Activated T-helper 2 cell treated with anti-CD3 and anti-CD28 coated beads, Interferon-gamma antibody, Interleukin-2, Interleukin-4, amounts not matched to agents 10 μg/mL and 5 μg/mL and 100 μg/mL, durations not matched to agents 14 hours and 24 hours and 36 hours (primary cell): ENCODE measurements at regions of chr4 and their contacts with region 1.

Region 1: DNA sequence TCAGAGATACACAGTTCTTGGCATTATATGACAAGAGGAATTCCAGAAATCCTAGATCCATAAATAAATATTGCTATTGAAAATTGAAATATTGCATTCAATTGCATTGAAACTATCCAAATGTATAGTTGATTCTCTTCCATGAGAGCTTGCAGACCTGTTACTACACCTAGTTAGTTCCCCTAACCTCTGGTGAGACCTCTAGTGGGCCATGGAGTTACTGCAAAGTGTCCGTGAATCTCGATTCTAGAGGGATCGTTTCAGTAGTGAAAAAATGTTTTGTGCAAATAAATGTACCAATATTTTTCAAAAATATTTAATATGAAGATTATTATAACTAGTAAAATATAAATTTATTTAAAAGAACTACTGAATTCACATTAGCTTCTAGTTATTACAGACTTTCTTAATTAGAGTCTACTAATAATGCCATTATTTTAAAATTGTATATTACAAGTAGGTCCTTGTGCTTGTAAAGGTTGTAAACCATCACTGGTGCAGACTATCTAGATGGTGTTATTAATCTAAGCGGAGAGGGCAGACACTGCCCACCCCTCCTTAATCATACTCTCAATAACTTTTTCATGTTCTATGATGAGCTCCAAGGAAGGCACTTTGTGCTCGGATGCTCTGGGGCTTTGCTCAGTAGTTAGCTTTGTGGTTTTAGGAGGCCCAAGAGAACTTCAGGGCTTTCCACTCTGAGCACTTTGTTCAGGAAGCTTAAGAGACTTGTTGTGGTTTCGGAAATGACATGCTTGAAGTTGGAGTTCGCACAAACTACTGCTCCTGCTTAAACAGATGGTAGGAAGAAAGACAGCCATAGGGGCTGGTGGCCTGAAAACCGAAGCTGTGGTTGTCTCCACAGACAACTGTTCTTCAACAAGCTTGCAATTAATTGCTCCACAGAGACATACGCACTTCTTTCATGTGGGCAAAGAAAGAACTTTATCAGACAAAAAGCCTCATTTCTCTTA is 42.8 kb downstream of the IL21 start:
- DNase-seq: peak; percentile 66
- H3K4me3 Mint-ChIP-seq: peak overlapping the region; percentile 63
- H3K27ac Mint-ChIP-seq: peak overlapping the region; percentile 90
- H3K4me1 Mint-ChIP-seq: peaks cover 38% of the 10 kb centered on the region
- H3K27me3 Mint-ChIP-seq: no peaks in the 10 kb centered on the region

Region 2: GRCh38 chr4:121736735-121737351 is 841.3 kb before region 1 on chr4:
- intact Hi-C with region 1: no loop called
- DNase-seq: no peak
- H3K4me3 Mint-ChIP-seq: no peak overlapping the region
- H3K27ac Mint-ChIP-seq: no peak overlapping the region
- H3K4me1 Mint-ChIP-seq: no peaks in the 10 kb centered on the region
- H3K27me3 Mint-ChIP-seq: peaks cover 29% of the 10 kb centered on the region

Region 3: DNA sequence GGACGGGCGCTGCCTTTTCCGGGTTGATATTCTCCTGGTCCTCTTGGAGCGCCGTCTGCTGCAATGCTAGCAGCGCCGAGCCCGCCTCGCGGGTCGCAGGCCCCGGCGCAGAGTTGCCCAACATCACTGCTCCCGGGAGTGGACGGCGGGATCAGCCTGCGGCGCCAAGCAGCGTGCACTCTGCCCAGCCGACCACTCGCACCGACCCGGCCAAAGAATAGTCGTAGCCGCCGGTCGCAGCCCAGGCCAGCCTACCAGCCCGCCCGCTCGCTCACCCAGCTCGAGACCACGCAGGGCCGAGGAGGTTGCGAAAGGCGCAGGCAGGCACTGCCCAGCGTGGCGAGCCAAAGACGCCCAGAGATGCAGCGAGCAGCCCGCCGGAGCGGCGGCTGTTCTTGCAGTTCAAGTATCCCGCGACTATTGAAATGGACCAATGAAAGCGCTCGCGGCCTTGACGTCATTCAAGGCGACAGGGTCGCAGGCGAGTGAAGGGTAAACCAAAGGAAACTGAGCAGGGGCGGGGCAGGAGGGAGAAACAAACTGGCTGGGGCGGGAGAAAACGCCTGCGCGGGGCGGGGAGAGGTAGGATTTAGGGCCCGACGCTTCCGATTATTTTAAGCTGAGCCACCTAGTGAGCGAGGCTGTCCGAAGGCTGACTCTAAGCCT is 754.5 kb before region 1 on chr4 and contains the start of gene CCNA2:
- intact Hi-C with region 1: loop called (anchors 5 kb)
- DNase-seq: peak; percentile 95
- H3K4me3 Mint-ChIP-seq: peak within 1 kb of the TSS; percentile 98
- H3K27ac Mint-ChIP-seq: peak within 1 kb of the TSS; percentile 94
- H3K4me1 Mint-ChIP-seq: peaks cover 35% of the 10 kb centered on the region
- H3K27me3 Mint-ChIP-seq: no peaks in the 10 kb centered on the region
- total RNA-seq, gene CCNA2: 74.7 and 75.1 TPM in 2 replicates

Region 4: GRCh38 chr4:121950212-121950679 is 627.8 kb before region 1 on chr4:
- intact Hi-C with region 1: loop called (anchors 1 kb)
- DNase-seq: peak; percentile 71
- H3K4me3 Mint-ChIP-seq: peak overlapping the region; percentile 82
- H3K27ac Mint-ChIP-seq: no peak overlapping the region
- H3K4me1 Mint-ChIP-seq: peaks cover 14% of the 10 kb centered on the region
- H3K27me3 Mint-ChIP-seq: peaks cover 63% of the 10 kb centered on the region

Region 5: DNA sequence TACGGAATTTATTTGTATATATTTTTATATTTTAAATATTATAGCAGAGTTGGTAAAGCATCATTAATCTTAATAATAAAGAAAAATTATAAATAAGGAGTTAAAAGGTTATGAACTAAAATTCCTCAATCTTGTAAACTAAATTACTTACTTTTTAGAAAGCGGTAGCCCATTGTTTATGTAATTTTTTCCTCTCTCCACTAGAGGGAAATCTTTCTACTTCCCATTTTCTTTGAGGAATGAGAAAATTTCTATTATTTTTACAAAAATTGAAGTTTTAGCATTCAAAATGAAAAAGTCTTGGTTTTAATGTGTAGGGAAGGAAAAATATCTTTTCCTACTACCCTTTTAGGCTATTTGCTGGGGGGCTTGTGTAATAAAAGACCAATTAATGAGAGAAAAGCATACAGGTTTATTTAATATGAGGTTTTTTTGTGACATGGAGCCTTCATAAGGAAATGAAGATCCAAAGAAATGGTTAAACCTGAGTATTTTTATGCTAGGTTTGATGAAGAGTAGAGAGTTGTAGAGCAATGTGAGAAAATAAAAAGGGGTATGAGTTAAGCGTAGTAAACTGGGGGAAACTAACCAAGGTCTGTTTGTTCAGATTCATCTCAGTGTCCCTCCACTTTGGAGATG is 268.0 kb before region 1 on chr4:
- intact Hi-C with region 1: loop called (anchors 2 kb)
- DNase-seq: no peak
- H3K4me3 Mint-ChIP-seq: no peak overlapping the region
- H3K27ac Mint-ChIP-seq: no peak overlapping the region
- H3K4me1 Mint-ChIP-seq: peaks cover 7% of the 10 kb centered on the region
- H3K27me3 Mint-ChIP-seq: no peaks in the 10 kb centered on the region

Region 6: GRCh38 chr4:122500852-122501501 is 77.1 kb before region 1 on chr4:
- intact Hi-C with region 1: loop called (anchors 1 kb)
- DNase-seq: no peak
- H3K4me3 Mint-ChIP-seq: no peak overlapping the region
- H3K27ac Mint-ChIP-seq: no peak overlapping the region
- H3K4me1 Mint-ChIP-seq: peaks cover 37% of the 10 kb centered on the region
- H3K27me3 Mint-ChIP-seq: peaks cover 11% of the 10 kb centered on the region

Region 7: GRCh38 chr4:122542411-122543236 is 35.5 kb before region 1 on chr4:
- intact Hi-C with region 1: loop called (anchors 1 kb)
- DNase-seq: no peak
- H3K4me3 Mint-ChIP-seq: peak overlapping the region; percentile 53
- H3K27ac Mint-ChIP-seq: peak overlapping the region; percentile 87
- H3K4me1 Mint-ChIP-seq: peaks cover 74% of the 10 kb centered on the region
- H3K27me3 Mint-ChIP-seq: peaks cover 1% of the 10 kb centered on the region

Region 8: GRCh38 chr4:122562449-122562848 is 15.6 kb before region 1 on chr4:
- intact Hi-C with region 1: no loop called
- DNase-seq: no peak
- H3K4me3 Mint-ChIP-seq: no peak overlapping the region
- H3K27ac Mint-ChIP-seq: no peak overlapping the region
- H3K4me1 Mint-ChIP-seq: peaks cover 7% of the 10 kb centered on the region
- H3K27me3 Mint-ChIP-seq: no peaks in the 10 kb centered on the region